Activated CD4-positive, alpha-beta T cell treated with anti-CD3 and anti-CD28 coated beads, Interleukin-2, amount 10 ng/mL, durations not matched to agents 24 days and 14 days (primary cell): ENCODE measurements at regions of chr7 and their contacts with region 1.

Region 1: GRCh38 chr7:156816943-156817572 is 75.9 kb downstream of the LMBR1 start:
- DNase-seq: no peak
- H3K4me3 Mint-ChIP-seq: no peak overlapping the region
- H3K27ac Mint-ChIP-seq: no peak overlapping the region
- H3K4me1 Mint-ChIP-seq: peaks cover 2% of the 10 kb centered on the region
- H3K27me3 Mint-ChIP-seq: no peaks in the 10 kb centered on the region

Region 2: GRCh38 chr7:155796381-155797261 is 1020.4 kb before region 1 on chr7:
- intact Hi-C with region 1: loop called (anchors 1 kb)
- DNase-seq: peak; percentile 91
- H3K4me3 Mint-ChIP-seq: no peak overlapping the region
- H3K27ac Mint-ChIP-seq: no peak overlapping the region
- H3K4me1 Mint-ChIP-seq: peaks cover 6% of the 10 kb centered on the region
- H3K27me3 Mint-ChIP-seq: peaks cover 36% of the 10 kb centered on the region

Region 3: DNA sequence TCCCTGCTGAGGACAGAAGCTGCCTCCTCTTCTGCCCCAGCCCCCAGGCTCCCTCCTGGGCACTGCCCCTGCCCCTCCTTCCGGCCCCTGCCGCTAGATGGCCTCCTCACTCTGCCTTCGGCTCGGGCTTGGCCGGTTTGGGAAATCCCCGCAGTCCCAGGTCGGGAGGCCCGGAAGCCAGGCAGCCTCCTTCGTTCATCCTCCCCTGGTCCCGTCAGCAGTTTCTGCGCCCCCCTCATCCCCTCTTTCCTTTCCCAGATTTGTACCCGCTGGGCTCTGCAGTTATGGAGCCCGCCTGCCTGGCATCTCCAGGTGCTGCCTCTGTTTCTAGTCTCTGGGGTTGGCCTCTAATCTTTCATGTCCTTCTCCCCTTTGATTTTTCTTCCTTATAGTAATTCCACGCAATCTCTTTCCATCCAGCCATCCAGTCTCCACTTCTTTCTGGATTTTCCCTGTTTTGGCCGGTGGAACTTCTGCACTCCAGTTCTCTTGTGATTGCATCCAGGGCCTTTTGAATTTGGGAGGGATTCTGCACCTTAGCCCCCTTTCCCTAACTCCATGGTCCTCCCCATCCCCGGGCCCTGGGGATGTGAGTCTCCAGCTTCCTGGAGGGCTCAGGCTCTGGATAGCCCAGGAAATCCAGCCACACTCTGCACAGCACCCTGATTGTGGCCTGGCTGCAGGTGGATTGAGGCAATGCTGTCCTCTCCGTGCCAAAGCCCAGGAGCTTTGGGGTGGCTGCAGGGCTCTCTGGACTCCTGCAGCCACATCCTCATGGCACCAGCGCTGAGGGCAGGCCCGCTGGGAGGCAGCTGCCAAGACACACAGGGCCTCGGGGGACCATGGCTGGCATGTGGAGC is 1001.5 kb before region 1 on chr7:
- intact Hi-C with region 1: loop called (anchors 5 kb)
- DNase-seq: peak; percentile 93
- H3K4me3 Mint-ChIP-seq: peak overlapping the region; percentile 34
- H3K27ac Mint-ChIP-seq: no peak overlapping the region
- H3K4me1 Mint-ChIP-seq: peaks cover 15% of the 10 kb centered on the region
- H3K27me3 Mint-ChIP-seq: peaks cover 42% of the 10 kb centered on the region

Region 4: GRCh38 chr7:156612930-156613329 is 204.1 kb before region 1 on chr7:
- intact Hi-C with region 1: loop called (anchors 5 kb)
- DNase-seq: peak; percentile 95
- H3K4me3 Mint-ChIP-seq: peak overlapping the region; percentile 70
- H3K27ac Mint-ChIP-seq: peak overlapping the region; percentile 68
- H3K4me1 Mint-ChIP-seq: peaks cover 43% of the 10 kb centered on the region
- H3K27me3 Mint-ChIP-seq: peaks cover 67% of the 10 kb centered on the region

Region 5: GRCh38 chr7:156650042-156650441 is 167.0 kb before region 1 on chr7:
- intact Hi-C with region 1: loop called (anchors 1 kb)
- DNase-seq: peak; percentile 72
- H3K4me3 Mint-ChIP-seq: no peak overlapping the region
- H3K27ac Mint-ChIP-seq: no peak overlapping the region
- H3K4me1 Mint-ChIP-seq: peaks cover 8% of the 10 kb centered on the region
- H3K27me3 Mint-ChIP-seq: peaks cover 36% of the 10 kb centered on the region

Region 6: GRCh38 chr7:156773966-156774365 is 43.1 kb before region 1 on chr7:
- intact Hi-C with region 1: loop called (anchors 2 kb)
- DNase-seq: no peak
- H3K4me3 Mint-ChIP-seq: no peak overlapping the region
- H3K27ac Mint-ChIP-seq: peak overlapping the region; percentile 20
- H3K4me1 Mint-ChIP-seq: peaks cover 36% of the 10 kb centered on the region
- H3K27me3 Mint-ChIP-seq: no peaks in the 10 kb centered on the region